CD4-positive, alpha-beta T cell (primary cell): ENCODE measurements at regions of chr7 and their contacts with region 1.

Region 1: DNA sequence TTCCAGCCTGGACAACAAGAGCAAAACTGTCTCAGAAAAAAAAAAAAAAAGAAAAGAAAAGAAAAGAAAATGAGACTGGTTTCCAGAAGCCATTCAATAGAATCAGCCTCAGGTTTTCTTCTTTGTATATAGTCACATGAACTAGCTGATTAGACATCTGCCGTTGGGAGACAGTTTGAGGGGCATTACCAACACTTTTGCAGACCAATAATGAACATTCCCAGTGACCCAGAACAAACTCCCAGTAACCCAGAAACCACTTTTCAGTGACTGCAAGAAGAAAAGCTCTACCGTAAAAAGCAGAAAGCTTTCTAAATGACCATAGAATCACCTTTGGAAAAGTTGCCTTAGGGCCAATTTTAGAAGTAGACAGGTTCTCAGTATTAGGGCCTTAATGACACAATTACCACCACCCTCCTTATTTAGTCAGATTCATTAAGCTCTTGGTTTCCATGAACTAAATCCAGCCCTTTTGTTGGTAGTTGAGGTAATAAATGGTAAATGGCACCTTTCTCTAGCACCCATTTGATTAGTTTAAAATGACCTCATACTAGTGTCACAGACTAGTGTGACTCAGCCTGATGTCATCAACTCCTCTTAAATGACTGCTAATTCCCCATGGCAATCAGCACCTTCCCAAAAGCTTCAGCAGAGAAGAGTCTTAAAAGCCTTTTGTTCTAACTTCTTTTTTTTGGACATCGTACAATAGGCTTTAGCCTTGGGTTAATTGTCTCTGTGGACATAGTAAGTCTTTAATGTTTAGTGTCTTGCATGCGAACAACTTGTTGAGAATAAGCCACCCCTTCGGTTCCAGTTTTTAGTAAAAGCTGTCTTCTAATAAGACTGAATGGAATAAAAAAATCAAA is 33.6 kb upstream of the XRCC2 start:
- DNase-seq: no peak
- ATAC-seq: no peak
- H3K4me3 ChIP-seq: no peak overlapping the region
- H3K4me3 Mint-ChIP-seq: no peak overlapping the region
- H3K27ac ChIP-seq: no peak overlapping the region
- H3K27ac Mint-ChIP-seq: no peak overlapping the region
- H3K4me1 ChIP-seq: no peaks in the 10 kb centered on the region
- H3K4me1 Mint-ChIP-seq: no peaks in the 10 kb centered on the region
- H3K27me3 ChIP-seq: no peaks in the 10 kb centered on the region
- H3K27me3 Mint-ChIP-seq: peaks cover 11% of the 10 kb centered on the region
- CTCF ChIP-seq: no peak

Region 2: DNA sequence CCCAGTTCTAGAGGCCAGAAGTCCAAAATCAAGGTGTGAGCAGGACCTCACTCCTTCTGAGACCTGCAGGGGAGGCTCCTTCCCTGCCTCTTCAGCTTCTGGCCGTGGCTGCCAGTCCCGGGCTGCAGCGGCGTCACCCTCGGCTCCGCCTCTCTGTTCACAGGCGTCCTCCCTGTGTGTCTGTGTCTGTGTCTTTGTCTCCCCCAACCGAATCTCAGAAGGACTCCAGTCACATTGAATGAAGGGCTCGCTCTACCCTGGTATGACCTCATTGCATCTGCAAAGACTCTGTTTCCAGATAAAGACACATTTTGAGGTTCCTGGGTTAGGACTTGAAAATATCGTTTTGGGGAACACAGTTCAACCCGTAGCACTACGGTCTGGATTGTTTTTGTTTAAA is 717.1 kb before region 1 on chr7:
- CTCF ChIA-PET with region 1: no interaction called
- POLR2A ChIA-PET with region 1: no interaction called
- intact Hi-C with region 1: no loop called
- DNase-seq: peak; percentile 12 to 72 (median 40)
- ATAC-seq: peak; percentile 99
- H3K4me3 ChIP-seq: no peak overlapping the region
- H3K4me3 Mint-ChIP-seq: no peak overlapping the region
- H3K27ac ChIP-seq: no peak overlapping the region
- H3K27ac Mint-ChIP-seq: no peak overlapping the region
- H3K4me1 ChIP-seq: peaks cover 4% of the 10 kb centered on the region
- H3K4me1 Mint-ChIP-seq: peaks cover 6% of the 10 kb centered on the region
- H3K27me3 ChIP-seq: peaks cover 0 to 7% of the 10 kb centered on the region in 2 experiments
- H3K27me3 Mint-ChIP-seq: peaks cover 69% of the 10 kb centered on the region
- CTCF ChIP-seq: no peak

Region 3: DNA sequence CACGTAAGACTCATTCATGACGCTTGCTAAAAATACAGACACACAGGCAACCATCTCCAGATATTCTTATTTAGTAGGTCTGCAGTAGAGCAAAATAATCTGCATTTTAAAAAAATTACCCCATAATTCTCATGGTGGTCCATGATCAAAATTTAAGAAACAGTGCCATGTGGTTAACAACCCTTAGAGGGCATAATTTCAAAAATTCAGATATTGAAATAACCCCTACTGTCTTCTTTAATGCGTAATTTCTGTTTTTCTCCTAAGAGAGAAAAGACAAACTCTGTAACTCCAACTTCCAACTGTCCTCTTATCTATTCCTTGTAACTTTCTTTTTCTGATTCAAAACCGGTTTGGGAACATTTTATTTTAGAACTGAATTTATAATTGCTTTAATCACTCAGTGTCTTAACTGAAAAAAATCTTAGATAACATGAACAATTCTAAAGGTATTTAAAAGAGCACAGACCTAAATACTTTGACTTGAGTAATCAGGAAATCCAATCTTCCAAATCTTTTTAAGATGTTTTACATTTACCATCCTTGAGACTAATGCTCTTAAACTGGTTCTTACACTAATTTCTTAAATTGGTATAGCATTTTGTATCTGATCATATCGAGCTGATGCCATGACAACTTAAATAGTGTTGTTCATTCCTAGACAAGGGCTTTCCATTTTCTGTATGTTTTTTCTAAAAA is 536.0 kb before region 1 on chr7:
- CTCF ChIA-PET with region 1: no interaction called
- POLR2A ChIA-PET with region 1: no interaction called
- intact Hi-C with region 1: loop called in 1 of 2 experiments (anchors 5 kb)
- DNase-seq: no peak
- ATAC-seq: no peak
- H3K4me3 ChIP-seq: no peak overlapping the region
- H3K4me3 Mint-ChIP-seq: no peak overlapping the region
- H3K27ac ChIP-seq: no peak overlapping the region
- H3K27ac Mint-ChIP-seq: no peak overlapping the region
- H3K4me1 ChIP-seq: no peaks in the 10 kb centered on the region
- H3K4me1 Mint-ChIP-seq: no peaks in the 10 kb centered on the region
- H3K27me3 ChIP-seq: no peaks in the 10 kb centered on the region
- H3K27me3 Mint-ChIP-seq: no peaks in the 10 kb centered on the region
- CTCF ChIP-seq: no peak